ENCODE measurements at regions of chr3 and their contacts with region 1.

Region 1: GRCh38 chr3:146189519-146190173 is 28.7 kb upstream of the PLOD2 start:
- DNase-seq: peak; percentile 32 to 52 (median 37)
- ATAC-seq: peak; percentile 90
- H3K4me3 ChIP-seq: no peak overlapping the region
- H3K27ac ChIP-seq: no peak overlapping the region
- H3K4me1 ChIP-seq: no peaks in the 10 kb centered on the region
- H3K27me3 ChIP-seq: no peaks in the 10 kb centered on the region
- CTCF ChIP-seq: peak; percentile 46 to 65 (median 64)
- EP300 ChIP-seq: no peak
- POLR2A ChIP-seq: no peak
- RAD21 ChIP-seq: peak; percentile 65 to 73

Region 2: GRCh38 chr3:146065573-146066006 is 124.1 kb before region 1 on chr3:
- CTCF ChIA-PET with region 1: no interaction called
- POLR2A ChIA-PET with region 1: no interaction called
- in situ Hi-C with region 1: no loop called
- intact Hi-C with region 1: loop called (anchors 5 kb)
- DNase-seq: peak in 2 of 4 experiments; percentile 8 to 53
- ATAC-seq: no peak
- H3K4me3 ChIP-seq: no peak overlapping the region
- H3K27ac ChIP-seq: no peak overlapping the region
- H3K4me1 ChIP-seq: no peaks in the 10 kb centered on the region
- H3K27me3 ChIP-seq: no peaks in the 10 kb centered on the region
- CTCF ChIP-seq: peak; percentile 28 to 62 (median 31); a peak in 3 of 6 replicates
- EP300 ChIP-seq: no peak
- POLR2A ChIP-seq: no peak
- RAD21 ChIP-seq: peak; percentile 60 to 75

Measured in K562 (cell line).